Prostate gland (tissue), 2 donors: ENCODE measurements at regions of chr10 and their contacts with region 1.

Region 1: DNA sequence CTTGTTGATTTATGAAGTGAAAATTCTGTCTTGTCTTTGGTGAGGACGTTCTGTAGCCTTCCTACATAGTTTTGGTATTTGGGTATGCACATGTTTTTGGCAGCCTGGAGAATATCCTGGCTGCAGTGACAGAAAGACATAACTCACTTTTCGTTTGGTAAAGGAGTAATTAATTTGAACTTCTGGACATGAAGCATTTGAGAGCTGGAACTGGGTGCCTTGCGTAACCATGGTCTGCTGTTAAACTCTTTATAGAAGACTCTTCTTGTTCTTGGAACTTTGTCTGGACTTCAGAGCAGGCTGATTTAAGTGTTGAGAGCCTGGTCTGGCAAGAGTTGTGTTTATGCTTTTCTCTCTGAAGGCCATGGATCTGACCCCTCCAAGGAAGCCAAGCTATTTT is 231.3 kb downstream of the LRMDA start:
- DNase-seq: peak; percentile 63
- H3K4me3 ChIP-seq: no peak overlapping the region
- H3K27ac ChIP-seq: peak overlapping the region; percentile 60 to 68
- H3K4me1 ChIP-seq: peaks cover 5% of the 10 kb centered on the region
- H3K27me3 ChIP-seq: no peaks in the 10 kb centered on the region
- CTCF ChIP-seq: no peak
- POLR2A ChIP-seq: no peak

Region 2: GRCh38 chr10:75469006-75469616 is 193.6 kb before region 1 on chr10:
- intact Hi-C with region 1: loop called (anchors 5 kb)
- DNase-seq: peak; percentile 73
- H3K4me3 ChIP-seq: no peak overlapping the region
- H3K27ac ChIP-seq: peak overlapping the region in 1 of 2 donors; percentile 23
- H3K4me1 ChIP-seq: no peaks in the 10 kb centered on the region
- H3K27me3 ChIP-seq: no peaks in the 10 kb centered on the region
- CTCF ChIP-seq: no peak
- POLR2A ChIP-seq: no peak

Region 3: GRCh38 chr10:75708060-75708459 is 45.3 kb after region 1 on chr10:
- intact Hi-C with region 1: loop called (anchors 5 kb)
- DNase-seq: peak; percentile 39
- H3K4me3 ChIP-seq: no peak overlapping the region
- H3K27ac ChIP-seq: peak overlapping the region in 1 of 2 donors; percentile 40
- H3K4me1 ChIP-seq: no peaks in the 10 kb centered on the region
- H3K27me3 ChIP-seq: no peaks in the 10 kb centered on the region
- CTCF ChIP-seq: no peak
- POLR2A ChIP-seq: no peak

Region 4: DNA sequence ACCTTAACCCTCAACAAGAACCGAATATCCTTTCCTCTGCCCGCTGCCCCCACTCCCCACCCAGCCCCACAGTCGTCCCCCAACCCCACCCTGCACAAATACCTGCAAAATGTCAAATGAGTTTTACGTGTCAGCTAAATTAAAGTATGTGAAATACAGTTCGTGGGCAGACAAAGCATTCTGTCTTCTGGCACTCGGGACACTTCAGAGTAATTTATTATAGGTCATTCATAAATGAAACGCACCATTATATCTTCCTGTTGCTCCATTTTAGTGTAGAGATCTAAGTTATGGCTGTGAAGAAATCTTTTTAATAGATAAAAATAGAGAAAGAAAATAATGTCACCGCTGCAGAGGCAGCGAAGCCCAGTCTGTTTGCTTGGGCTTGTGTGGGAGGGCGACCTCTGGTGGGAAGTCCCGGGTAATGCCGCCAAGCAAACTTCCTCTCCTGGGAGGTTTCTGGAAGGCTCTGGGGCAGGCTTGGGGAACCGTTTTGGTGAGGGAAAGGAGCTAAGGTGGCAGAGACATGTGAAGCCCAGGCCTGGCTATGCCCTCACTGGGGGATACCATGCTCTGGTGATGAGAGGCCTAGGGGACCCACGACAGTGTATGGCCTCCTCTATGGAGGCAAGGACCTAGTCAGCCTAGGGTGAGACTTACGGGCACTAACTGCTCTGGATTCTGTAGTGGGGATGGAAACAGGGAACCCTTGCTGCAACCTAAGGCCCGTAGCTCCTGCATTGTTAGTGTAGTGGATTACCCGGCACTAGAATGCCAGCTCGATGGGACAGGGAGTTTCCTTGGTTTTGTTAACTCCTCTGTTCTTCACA is 373.6 kb after region 1 on chr10:
- intact Hi-C with region 1: loop called (anchors 10 kb)
- DNase-seq: peak; percentile 79
- H3K4me3 ChIP-seq: no peak overlapping the region
- H3K27ac ChIP-seq: peak overlapping the region; percentile 13 to 48
- H3K4me1 ChIP-seq: peaks cover 4% of the 10 kb centered on the region
- H3K27me3 ChIP-seq: no peaks in the 10 kb centered on the region
- CTCF ChIP-seq: peak; percentile 79 to 95 (median 91)
- POLR2A ChIP-seq: no peak

Region 5: DNA sequence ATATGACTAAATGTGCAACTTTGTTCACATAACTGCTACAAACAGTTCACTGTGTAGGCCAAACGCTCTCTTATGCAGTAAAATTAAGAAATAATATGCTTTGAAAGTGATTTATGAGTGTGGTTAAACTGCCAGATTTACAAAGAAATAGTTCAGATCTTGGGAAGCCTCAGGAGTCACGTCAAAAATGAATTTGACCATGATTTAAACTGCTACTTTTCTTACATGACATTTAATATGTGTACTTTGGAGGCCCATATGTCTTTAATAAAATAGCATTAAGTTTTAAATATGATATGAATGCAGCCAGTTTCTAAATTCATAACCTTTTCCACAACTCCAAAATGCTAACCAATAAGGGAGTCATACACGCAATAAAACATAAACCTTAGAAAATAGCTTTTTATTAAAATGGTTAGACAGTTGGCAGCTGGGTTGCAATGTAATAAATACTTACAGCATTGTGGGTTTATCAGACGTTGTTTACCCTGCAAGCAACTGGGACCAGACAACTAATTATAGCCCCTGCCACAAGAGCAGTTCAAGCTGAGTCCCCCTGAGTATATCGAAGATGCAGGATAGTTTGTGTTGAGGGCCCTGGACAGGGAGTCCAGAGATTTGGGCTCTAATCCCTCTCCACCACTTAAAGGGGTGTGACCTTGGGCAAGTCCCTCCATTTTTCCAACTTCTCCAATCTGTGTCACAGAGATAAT is 409.1 kb after region 1 on chr10:
- intact Hi-C with region 1: loop called (anchors 5 kb)
- DNase-seq: no peak
- H3K4me3 ChIP-seq: no peak overlapping the region
- H3K27ac ChIP-seq: peak overlapping the region in 1 of 2 donors; percentile 36
- H3K4me1 ChIP-seq: no peaks in the 10 kb centered on the region
- H3K27me3 ChIP-seq: no peaks in the 10 kb centered on the region
- CTCF ChIP-seq: no peak
- POLR2A ChIP-seq: no peak